Posterior vena cava (tissue), 2 donors: ENCODE measurements at regions of chr10 and their contacts with region 1.

Region 1: GRCh38 chr10:82190432-82191251 is 315.6 kb downstream of the NRG3 start:
- DNase-seq: no peak

Region 2: DNA sequence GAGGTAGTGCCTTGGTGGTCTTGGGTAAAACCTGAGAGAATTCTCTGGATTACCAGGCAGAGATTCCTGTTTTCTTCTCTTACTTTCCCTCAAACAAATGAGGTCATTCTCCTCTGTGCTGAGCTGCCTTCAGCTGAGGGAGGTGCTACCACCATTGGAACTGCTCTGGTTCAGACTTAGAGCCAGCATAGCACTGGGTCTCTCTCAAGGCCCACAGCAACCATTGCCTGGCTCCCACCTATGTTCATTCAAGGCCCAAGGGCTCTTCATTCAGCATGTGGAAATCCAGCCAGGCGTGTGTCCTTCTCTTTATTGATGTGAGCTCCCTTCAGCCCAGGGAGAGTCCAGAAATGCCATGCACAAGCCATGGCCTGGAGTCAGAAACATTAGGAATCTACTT is 54.5 kb before region 1 on chr10:
- intact Hi-C with region 1: no loop called
- DNase-seq: no peak

Region 3: DNA sequence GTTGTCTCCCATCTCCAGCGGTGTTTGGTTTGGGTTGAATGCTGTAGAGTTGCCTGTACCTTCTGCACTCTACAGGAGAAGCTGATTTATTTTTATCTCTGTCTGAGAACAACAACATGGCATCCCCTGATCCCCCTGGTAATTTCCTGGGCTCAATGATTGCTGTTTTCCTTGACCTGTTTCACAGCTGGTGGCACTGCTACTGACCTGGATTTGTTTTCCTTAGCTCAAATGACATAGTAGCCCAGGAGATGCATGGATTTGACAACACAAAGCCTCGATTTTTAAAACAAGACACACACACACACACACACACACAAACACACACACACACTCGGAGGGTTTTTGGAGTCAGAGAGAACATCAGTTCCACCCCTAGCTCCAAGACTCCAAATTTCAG is 14.1 kb before region 1 on chr10:
- intact Hi-C with region 1: loop called in 1 of 2 experiments (anchors 1 kb)
- DNase-seq: no peak